ENCODE measurements at regions of chr1 and their contacts with region 1.

Region 1: DNA sequence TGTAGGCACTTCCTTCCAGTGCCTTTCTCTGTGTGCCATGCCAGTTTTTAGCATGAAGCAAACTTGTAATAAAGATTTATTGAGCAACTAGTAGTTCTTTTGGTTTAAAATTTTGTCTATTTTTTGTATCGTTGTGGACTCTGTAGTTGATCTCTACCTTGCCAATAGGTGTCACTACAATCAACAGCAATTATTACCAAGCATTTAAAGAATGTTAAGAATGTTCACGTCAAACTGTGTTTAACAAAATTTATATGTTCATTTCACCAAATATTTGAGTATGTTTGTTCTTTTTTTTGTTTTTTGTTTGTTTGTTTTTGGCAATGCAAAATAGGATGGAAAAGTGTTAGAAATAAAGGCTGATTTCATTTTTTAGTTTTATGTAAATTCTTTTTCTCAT is 208.1 kb downstream of the PATJ start:
- DNase-seq: no peak
- H3K4me3 ChIP-seq: no peak overlapping the region
- H3K27ac ChIP-seq: no peak overlapping the region
- H3K4me1 ChIP-seq: peaks cover 20% of the 10 kb centered on the region
- H3K27me3 ChIP-seq: no peaks in the 10 kb centered on the region
- CTCF ChIP-seq: peak; percentile 53 to 55

Region 2: GRCh38 chr1:61504852-61505390 is 445.5 kb before region 1 on chr1:
- CTCF ChIA-PET with region 1: no interaction called
- dilution Hi-C with region 1: no loop called
- in situ Hi-C with region 1: no loop called
- intact Hi-C with region 1: no loop called
- DNase-seq: peak; percentile 87
- H3K4me3 ChIP-seq: no peak overlapping the region
- H3K27ac ChIP-seq: no peak overlapping the region
- H3K4me1 ChIP-seq: peaks cover 15% of the 10 kb centered on the region
- H3K27me3 ChIP-seq: no peaks in the 10 kb centered on the region
- CTCF ChIP-seq: no peak

Region 3: GRCh38 chr1:61851849-61852669 is 98.4 kb before region 1 on chr1:
- CTCF ChIA-PET with region 1: no interaction called
- dilution Hi-C with region 1: no loop called
- in situ Hi-C with region 1: no loop called
- intact Hi-C with region 1: no loop called
- DNase-seq: peak; percentile 31
- H3K4me3 ChIP-seq: no peak overlapping the region
- H3K27ac ChIP-seq: no peak overlapping the region
- H3K4me1 ChIP-seq: no peaks in the 10 kb centered on the region
- H3K27me3 ChIP-seq: no peaks in the 10 kb centered on the region
- CTCF ChIP-seq: peak; percentile 68 to 78

Region 4: GRCh38 chr1:61993331-61993961 is 43.0 kb after region 1 on chr1:
- CTCF ChIA-PET with region 1: no interaction called
- dilution Hi-C with region 1: no loop called
- in situ Hi-C with region 1: no loop called
- intact Hi-C with region 1: loop called (anchors 2 kb)
- DNase-seq: peak; percentile 99
- H3K4me3 ChIP-seq: no peak overlapping the region
- H3K27ac ChIP-seq: peak overlapping the region; percentile 63
- H3K4me1 ChIP-seq: peaks cover 28% of the 10 kb centered on the region
- H3K27me3 ChIP-seq: no peaks in the 10 kb centered on the region
- CTCF ChIP-seq: no peak

Region 5: GRCh38 chr1:62070384-62071011 is 120.1 kb after region 1 on chr1:
- CTCF ChIA-PET with region 1: no interaction called
- dilution Hi-C with region 1: no loop called
- in situ Hi-C with region 1: no loop called
- intact Hi-C with region 1: loop called (anchors 2 kb)
- DNase-seq: no peak
- H3K4me3 ChIP-seq: no peak overlapping the region
- H3K27ac ChIP-seq: no peak overlapping the region
- H3K4me1 ChIP-seq: no peaks in the 10 kb centered on the region
- H3K27me3 ChIP-seq: no peaks in the 10 kb centered on the region
- CTCF ChIP-seq: peak; percentile 45 to 51

Region 6: DNA sequence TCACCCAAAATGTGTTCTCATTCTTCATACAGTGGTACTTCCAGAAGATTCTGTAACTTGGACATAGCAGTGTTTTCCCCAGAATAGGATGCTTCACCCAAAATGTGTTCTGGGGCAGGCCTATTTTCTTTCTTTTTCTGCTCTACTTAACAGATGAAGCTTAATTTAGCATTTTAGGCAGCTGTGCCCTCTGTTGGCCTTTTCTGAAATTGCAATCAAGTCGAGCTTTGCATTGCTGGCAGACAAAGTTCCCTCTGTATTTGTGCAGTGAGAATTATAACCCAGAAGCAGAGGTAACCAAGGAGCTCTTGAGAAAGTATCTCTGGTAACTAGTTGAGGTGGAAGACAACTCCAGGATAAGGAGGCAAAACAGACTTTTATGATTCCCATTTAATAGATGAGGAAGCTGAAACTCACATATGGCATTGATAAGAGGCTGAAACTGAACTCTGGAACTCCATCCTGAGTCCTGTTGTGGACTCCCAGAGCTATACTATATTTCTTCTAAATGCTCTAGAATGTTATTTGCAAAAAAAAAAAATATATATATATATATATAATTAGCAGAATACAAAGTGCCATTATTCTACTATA is 193.9 kb after region 1 on chr1:
- CTCF ChIA-PET with region 1: no interaction called
- dilution Hi-C with region 1: no loop called
- in situ Hi-C with region 1: no loop called
- intact Hi-C with region 1: loop called (anchors 5 kb)
- DNase-seq: peak; percentile 34
- H3K4me3 ChIP-seq: no peak overlapping the region
- H3K27ac ChIP-seq: no peak overlapping the region
- H3K4me1 ChIP-seq: no peaks in the 10 kb centered on the region
- H3K27me3 ChIP-seq: no peaks in the 10 kb centered on the region
- CTCF ChIP-seq: peak; percentile 65 to 82

Measured in mammary epithelial cell (primary cell).